ENCODE measurements at regions of chr11 and their contacts with region 1.

Region 1: DNA sequence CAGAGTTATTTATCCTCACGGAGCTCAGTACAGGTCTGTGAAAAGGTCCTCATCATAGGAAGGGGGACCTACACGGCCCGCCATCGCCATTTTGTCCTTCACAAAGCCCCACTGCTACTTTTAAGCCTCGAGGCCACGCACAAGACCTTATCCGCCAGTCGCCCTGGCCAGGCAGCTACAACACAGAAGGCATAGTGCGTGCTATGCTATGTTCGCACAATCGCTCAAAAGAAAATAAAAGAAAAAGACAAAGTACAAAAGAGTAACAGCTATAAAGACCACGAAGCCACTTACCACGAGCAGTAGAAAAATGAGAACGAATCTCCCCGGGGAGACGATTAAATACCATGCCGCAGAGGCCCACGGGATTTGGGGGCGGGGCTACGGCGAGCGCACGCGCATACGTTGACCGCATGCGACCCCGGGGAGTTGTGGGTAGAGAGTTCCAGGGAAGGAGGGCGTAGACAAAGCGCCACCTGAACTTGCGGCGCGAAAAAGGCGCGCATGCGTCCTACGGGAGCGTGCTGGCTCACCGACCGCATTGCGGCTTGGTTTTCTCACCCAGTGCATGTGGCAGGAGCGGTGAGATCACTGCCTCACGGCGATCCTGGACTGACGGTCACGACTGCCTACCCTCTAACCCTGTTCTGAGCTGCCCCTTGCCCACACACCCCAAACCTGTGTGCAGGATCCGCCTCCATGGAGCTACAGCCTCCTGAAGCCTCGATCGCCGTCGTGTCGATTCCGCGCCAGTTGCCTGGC is 16.4 kb upstream of the WDR74 start:
- DNase-seq: peak; percentile 98

Region 2: DNA sequence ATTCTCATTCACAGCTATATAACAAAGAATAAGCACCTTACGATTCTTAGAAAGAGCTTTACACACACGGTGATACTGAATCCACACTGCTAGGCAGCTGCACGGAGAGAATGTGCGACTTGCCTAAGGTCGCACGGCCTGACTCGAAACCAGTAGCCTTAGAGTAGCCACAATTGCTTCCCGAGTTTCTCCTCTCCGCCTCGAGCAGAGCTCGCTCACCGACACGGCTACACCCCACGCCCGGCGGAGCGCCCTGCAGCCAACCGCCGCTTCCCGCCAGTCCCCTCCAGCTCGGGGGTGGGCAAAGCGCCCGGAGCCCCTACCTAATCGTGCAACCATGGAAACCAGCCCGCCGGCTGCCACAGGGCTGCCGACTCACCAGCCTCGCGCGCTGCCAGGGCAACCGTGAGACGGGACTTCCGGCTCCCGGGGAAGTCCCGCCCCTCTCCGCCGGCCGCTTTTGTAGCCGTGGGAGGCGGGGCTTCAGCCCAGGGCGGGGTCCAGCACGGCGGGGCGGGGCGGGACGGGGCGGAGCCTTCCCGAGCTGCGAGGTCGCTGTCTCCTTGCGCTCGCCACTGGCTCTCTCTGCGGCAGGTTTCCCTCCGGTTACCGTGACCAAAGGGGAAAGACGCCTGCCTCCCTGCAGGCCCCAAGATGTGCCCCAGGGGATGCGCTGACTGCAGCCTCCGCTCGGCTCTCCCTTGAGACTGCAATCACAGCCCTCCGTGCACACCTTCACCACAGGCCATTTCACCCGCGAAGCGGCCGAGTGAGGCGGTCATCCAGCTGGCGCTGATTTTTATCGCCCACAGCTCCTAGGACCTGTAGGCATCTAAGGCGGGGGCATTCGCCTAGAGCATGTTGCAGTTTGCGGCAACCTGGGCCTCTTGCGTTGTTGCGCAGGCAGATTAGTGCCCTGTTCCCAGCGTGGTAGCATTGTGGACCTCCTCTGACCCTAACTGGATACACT is 149.6 kb before region 1 on chr11:
- CTCF ChIA-PET with region 1: no interaction called
- POLR2A ChIA-PET with region 1: interaction called, 10 read pairs
- DNase-seq: peak; percentile 93

Region 3: GRCh38 chr11:62753736-62754603 is 101.8 kb before region 1 on chr11 and contains the start of gene ZBTB3:
- CTCF ChIA-PET with region 1: no interaction called
- POLR2A ChIA-PET with region 1: interaction called, 25 read pairs
- DNase-seq: peak; percentile 94

Region 4: DNA sequence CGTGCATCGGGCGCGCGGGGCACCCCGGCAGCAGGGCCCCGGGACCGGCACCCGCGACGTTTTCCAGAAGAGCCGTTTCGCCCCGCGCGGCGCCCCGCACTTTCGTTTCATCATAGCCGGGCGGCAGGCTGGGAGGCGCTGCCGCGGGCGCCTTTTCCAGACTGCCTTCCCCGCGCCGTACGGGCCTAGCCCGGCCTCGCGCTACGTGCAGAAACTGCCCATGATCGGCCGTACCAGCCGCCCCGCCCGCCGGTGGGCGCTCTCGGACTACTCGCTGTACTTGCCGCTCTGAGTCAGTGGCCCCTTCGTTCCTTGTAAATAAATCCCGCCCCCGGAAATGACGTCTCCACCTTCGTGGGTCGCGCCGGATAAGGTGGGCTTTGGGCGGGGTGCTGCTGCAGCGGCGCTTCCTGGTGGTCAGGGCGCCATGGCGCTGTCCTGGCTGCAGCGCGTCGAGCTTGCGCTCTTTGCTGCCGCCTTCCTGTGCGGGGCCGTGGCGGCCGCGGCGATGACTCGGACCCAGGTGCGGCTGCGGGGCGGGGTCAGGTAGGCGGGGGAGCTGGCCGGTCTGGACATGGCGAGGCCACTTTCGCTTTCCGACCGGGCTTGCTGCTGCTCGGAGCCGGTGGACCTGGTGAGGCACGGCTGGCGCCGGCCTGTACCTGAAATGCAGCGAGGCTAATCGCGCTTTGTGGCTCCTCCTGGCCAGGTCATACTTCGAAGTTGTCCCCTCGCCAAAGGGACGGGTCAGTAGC is 68.6 kb before region 1 on chr11 and contains the start of gene TMEM179B:
- CTCF ChIA-PET with region 1: interaction called, 22 read pairs
- POLR2A ChIA-PET with region 1: interaction called, 57 read pairs
- DNase-seq: peak; percentile 91

Region 5: GRCh38 chr11:62875698-62876478 is 20.1 kb after region 1 on chr11:
- CTCF ChIA-PET with region 1: interaction called, 6 read pairs
- POLR2A ChIA-PET with region 1: interaction called, 87 read pairs
- DNase-seq: no peak

Region 6: GRCh38 chr11:62889484-62890437 is 34.0 kb after region 1 on chr11:
- CTCF ChIA-PET with region 1: no interaction called
- POLR2A ChIA-PET with region 1: interaction called, 43 read pairs
- DNase-seq: peak; percentile 42

Region 7: DNA sequence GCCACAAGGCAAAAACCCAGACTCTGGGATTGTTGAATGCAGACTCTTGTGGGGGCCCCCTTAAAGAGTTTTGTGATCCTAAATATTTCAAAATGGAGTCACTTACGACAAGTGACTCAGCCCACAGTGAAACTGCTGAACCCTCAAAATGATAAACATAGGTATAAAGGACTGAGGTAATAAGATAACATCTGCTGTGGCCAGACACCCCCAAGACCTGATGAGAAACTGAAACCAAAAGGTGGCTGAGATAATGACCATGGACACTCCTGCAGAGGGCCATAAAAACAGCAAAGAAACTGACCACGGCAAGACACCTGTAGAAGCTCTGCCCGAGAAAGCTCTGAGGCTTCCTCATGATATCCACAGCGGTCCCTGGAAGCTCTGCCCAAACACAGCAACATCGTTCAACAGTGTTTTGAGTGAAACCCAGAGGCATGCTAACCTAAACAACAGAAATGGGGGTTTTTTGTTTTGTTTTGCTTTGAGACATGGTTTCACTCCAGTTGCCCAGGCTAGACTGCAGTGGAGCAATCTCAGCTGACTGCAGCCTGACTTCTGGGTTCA is 679.2 kb after region 1 on chr11:
- CTCF ChIA-PET with region 1: no interaction called
- POLR2A ChIA-PET with region 1: no interaction called
- DNase-seq: no peak

Measured in HEK293T (cell line).